ENCODE measurements at regions of chr4 and their contacts with region 1.

Region 1: DNA sequence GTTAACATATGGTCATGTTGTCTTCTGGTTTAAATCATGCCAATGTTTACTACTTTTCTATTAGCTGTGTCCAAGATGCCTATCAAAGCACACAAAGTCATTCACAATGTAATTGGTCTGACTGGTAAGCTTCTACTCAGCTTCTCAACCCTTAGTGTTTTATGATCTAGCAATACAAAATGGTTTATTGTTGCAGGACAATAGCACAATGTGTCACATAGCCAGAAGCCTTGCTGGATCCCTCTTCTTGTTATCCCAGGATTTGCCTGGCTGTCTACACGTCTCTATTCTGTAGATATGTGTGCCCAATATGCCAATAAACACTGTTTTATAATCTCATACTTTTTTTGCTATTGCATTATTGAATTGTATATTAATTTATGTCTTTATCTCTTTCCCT is 1111.0 kb upstream of the AGA start:
- DNase-seq: no peak
- H3K4me3 ChIP-seq: no peak overlapping the region
- H3K27ac ChIP-seq: no peak overlapping the region
- H3K4me1 ChIP-seq: no peaks in the 10 kb centered on the region
- H3K27me3 ChIP-seq: no peaks in the 10 kb centered on the region
- CTCF ChIP-seq: no peak

Region 2: GRCh38 chr4:177229331-177229730 is 1323.9 kb before region 1 on chr4:
- CTCF ChIA-PET with region 1: no interaction called
- POLR2A ChIA-PET with region 1: no interaction called
- intact Hi-C with region 1: loop called (anchors 10 kb)
- DNase-seq: no peak
- H3K4me3 ChIP-seq: peak overlapping the region; percentile 20
- H3K27ac ChIP-seq: no peak overlapping the region
- H3K4me1 ChIP-seq: no peaks in the 10 kb centered on the region
- H3K27me3 ChIP-seq: no peaks in the 10 kb centered on the region
- CTCF ChIP-seq: no peak

Region 3: GRCh38 chr4:178953447-178954120 is 400.4 kb after region 1 on chr4:
- CTCF ChIA-PET with region 1: no interaction called
- POLR2A ChIA-PET with region 1: no interaction called
- intact Hi-C with region 1: no loop called
- DNase-seq: no peak
- H3K4me3 ChIP-seq: no peak overlapping the region
- H3K27ac ChIP-seq: no peak overlapping the region
- H3K4me1 ChIP-seq: no peaks in the 10 kb centered on the region
- H3K27me3 ChIP-seq: no peaks in the 10 kb centered on the region
- CTCF ChIP-seq: no peak